Brain microvascular endothelial cell (primary cell): ENCODE measurements at regions of chr7 and their contacts with region 1.

Region 1: DNA sequence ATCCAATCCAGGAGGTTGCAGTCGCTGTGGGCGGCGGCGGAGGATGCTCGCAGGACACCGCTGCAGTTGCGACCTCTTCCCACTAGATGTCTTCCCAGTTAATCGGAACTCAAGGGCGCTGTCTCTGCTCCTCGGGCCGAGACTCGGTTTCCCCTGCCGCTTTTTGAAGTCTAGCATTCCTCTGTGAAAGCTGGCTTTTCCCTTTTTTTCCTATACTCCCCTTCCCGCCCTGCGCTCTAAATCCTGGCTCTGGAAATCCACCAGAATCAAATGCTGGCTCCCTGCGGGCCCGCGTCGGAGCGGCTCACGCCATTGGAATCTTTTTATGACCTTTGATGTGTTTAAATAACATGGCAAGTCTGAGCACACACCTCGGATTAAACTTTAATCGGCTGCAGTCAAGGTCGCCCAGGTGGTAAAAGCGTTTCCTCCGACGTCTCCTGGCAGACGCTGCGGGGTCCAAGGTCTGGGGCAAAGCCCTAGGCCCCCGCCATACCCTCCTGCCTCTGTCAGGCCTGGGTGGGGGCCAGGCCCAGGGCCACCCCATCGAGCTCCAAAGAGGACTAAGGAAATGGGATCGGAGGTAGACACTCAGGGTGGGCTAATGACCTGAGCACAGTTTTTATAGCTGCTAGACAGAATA is 10.7 kb upstream of the HOXA13 start:
- DNase-seq: peak; percentile 40
- H3K4me3 ChIP-seq: peak overlapping the region; percentile 20
- H3K27ac ChIP-seq: no peak overlapping the region
- H3K27me3 ChIP-seq: peaks cover 95% of the 10 kb centered on the region
- CTCF ChIP-seq: peak; percentile 84

Region 2: DNA sequence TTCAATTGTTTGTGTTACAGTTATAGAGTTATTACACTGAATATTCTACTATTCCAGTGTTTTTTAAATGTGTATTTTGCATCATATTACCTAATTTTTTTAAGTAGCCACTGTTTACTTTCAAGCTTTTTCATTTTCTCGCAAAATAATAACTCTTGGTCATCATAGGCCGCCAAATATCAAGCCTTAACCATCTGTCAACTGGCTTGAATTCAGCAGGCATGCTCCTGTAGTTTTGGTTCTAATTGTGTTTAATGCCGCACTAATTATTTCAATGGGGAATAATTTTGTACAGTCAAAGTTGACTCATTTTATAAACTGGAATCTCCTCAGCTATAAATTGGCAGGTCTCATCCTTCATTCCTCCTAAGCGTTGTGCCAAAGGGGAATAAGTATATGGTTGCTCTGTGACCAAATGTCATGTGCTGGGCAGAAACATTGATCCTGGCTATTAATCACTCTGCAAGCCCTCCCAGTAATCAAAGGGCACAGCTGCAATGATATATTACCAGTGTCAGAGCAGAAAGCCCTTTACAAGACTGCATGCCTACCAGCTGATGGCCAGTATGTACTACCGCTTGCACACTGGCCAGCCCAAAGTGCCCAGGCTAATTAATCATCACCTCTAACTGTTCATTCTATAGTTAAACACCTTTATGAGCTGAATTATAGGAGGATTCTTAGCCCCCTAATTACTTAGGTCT is 420.9 kb before region 1 on chr7:
- in situ Hi-C with region 1: no loop called
- DNase-seq: no peak
- H3K4me3 ChIP-seq: no peak overlapping the region
- H3K27ac ChIP-seq: no peak overlapping the region
- H3K27me3 ChIP-seq: no peaks in the 10 kb centered on the region
- CTCF ChIP-seq: no peak

Region 3: GRCh38 chr7:27576360-27576944 is 365.9 kb after region 1 on chr7:
- in situ Hi-C with region 1: loop called (anchors 25 kb)
- DNase-seq: no peak
- H3K4me3 ChIP-seq: no peak overlapping the region
- H3K27ac ChIP-seq: no peak overlapping the region
- H3K27me3 ChIP-seq: no peaks in the 10 kb centered on the region
- CTCF ChIP-seq: peak; percentile 28